K562 (cell line): ENCODE measurements at regions of chr7 and their contacts with region 1.

Region 1: GRCh38 chr7:107622429-107622828 is 38.2 kb upstream of the SLC26A4 start:
- DNase-seq: no peak
- ATAC-seq: peak; percentile 45
- H3K4me3 ChIP-seq: no peak overlapping the region
- H3K27ac ChIP-seq: no peak overlapping the region
- H3K4me1 ChIP-seq: no peaks in the 10 kb centered on the region
- H3K27me3 ChIP-seq: no peaks in the 10 kb centered on the region
- CTCF ChIP-seq: no peak
- EP300 ChIP-seq: no peak
- POLR2A ChIP-seq: no peak
- RAD21 ChIP-seq: no peak

Region 2: DNA sequence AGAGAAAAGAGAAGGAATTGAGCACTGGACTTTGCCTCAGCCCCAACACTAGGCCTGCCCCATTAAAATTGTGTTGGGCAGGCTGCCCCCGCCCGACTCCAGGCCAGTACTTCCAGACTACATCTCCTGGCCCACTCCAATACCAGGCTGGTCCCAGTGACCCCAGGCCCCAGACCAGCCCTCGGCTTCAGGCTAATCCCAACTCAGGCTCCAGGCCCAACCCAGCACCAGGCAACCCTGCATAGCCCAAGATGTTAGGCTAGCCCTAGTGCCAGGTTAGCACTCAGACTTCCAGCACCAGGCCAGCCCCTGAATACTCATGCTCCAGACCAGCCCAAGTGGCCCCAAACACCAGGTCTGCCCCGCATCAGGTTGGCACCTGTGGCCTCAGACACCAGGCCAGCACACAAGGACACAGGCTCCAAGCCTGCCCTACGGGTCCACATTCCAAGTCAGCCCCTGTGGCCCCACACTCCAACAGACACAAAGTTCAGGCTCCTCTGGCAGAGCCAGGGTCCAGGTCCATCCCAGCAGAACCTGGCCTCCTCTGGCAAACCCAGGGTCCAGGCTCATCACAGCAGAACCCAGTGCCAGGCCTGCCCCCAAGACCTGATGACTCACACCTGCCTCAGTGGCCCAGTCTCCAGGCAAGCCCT is 79.0 kb before region 1 on chr7:
- CTCF ChIA-PET with region 1: no interaction called
- POLR2A ChIA-PET with region 1: no interaction called
- in situ Hi-C with region 1: no loop called
- intact Hi-C with region 1: no loop called
- DNase-seq: no peak
- ATAC-seq: peak; percentile 38; the same call in 1 of the 3 replicates
- H3K4me3 ChIP-seq: no peak overlapping the region
- H3K27ac ChIP-seq: no peak overlapping the region
- H3K4me1 ChIP-seq: peaks cover 0 to 5% of the 10 kb centered on the region in 2 experiments; a peak in 1 of 5 replicates
- H3K27me3 ChIP-seq: no peaks in the 10 kb centered on the region
- CTCF ChIP-seq: no peak
- EP300 ChIP-seq: no peak
- POLR2A ChIP-seq: no peak
- RAD21 ChIP-seq: no peak

Region 3: GRCh38 chr7:107605218-107605815 is 17.1 kb before region 1 on chr7:
- CTCF ChIA-PET with region 1: no interaction called
- POLR2A ChIA-PET with region 1: interaction called, 11 read pairs
- in situ Hi-C with region 1: no loop called
- intact Hi-C with region 1: no loop called
- DNase-seq: no peak
- ATAC-seq: no peak
- H3K4me3 ChIP-seq: no peak overlapping the region
- H3K27ac ChIP-seq: no peak overlapping the region
- H3K4me1 ChIP-seq: no peaks in the 10 kb centered on the region
- H3K27me3 ChIP-seq: no peaks in the 10 kb centered on the region
- CTCF ChIP-seq: no peak
- EP300 ChIP-seq: no peak
- POLR2A ChIP-seq: no peak
- RAD21 ChIP-seq: no peak

Region 4: DNA sequence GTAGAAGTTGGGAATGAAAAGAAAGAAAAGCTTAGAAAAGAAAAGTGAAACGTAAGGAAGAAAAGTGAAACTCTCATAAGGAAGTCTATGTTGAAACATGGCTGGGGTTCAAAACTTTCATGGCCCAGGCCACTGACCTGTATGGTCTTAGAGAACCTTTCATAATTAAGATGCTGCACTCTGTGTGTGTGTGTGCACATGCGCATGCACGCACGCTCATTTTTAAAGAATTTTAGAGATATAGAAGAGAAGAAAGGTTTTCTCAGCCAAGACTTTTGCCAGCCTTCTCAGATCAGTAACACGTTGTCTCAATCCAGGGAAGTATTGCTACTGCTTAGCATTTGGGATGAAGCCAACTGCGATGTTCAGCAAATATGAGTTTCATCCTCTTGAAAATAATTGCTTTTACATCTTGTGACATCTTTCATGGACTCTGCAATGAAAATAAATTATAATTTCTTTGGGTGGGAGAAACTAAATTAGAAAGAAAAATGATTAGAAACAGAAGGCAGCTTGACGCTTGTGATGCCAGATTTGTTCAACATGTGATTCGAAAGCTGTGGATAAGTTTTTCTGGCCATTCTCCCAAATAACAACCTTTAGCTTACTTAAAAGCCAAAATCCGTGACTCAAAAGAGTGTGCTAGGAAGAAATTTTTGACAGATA is 22.0 kb after region 1 on chr7:
- CTCF ChIA-PET with region 1: no interaction called
- POLR2A ChIA-PET with region 1: no interaction called
- in situ Hi-C with region 1: no loop called
- intact Hi-C with region 1: no loop called
- DNase-seq: no peak
- ATAC-seq: no peak; the same call in 2 of the 3 replicates
- H3K4me3 ChIP-seq: no peak overlapping the region
- H3K27ac ChIP-seq: no peak overlapping the region
- H3K4me1 ChIP-seq: no peaks in the 10 kb centered on the region
- H3K27me3 ChIP-seq: peaks cover 4 to 6% of the 10 kb centered on the region in 2 experiments; a peak in 2 of 5 replicates
- CTCF ChIP-seq: no peak
- EP300 ChIP-seq: no peak
- POLR2A ChIP-seq: no peak
- RAD21 ChIP-seq: no peak